Mammary epithelial cell (primary cell): ENCODE measurements at regions of chr6 and their contacts with region 1.

Region 1: DNA sequence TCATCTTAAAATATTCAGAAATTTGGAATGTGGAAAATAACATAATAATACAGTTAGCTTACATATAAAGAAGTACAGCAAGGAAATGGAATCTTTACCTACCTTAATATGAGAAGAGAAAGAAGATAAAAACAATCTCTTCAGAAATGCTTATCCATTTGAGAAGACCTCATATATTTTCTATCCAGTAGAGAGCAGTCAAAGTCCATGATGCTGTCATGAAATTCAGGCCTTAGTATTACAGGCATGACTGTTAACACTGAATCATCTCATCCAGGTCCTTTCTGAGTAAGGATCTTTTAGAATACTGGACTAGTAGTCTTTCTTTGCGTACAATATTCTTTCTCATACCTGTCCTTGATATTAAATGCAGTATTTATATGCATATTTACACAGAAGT is 713.4 kb downstream of the CD109 start:
- DNase-seq: peak; percentile 49
- H3K4me3 ChIP-seq: no peak overlapping the region
- H3K27ac ChIP-seq: no peak overlapping the region
- H3K4me1 ChIP-seq: no peaks in the 10 kb centered on the region
- H3K27me3 ChIP-seq: no peaks in the 10 kb centered on the region
- CTCF ChIP-seq: peak; percentile 29 to 70

Region 2: GRCh38 chr6:73969971-73970970 is 439.2 kb before region 1 on chr6:
- CTCF ChIA-PET with region 1: no interaction called
- dilution Hi-C with region 1: no loop called
- in situ Hi-C with region 1: no loop called
- intact Hi-C with region 1: loop called (anchors 2 kb)
- DNase-seq: peak; percentile 54
- H3K4me3 ChIP-seq: no peak overlapping the region
- H3K27ac ChIP-seq: no peak overlapping the region
- H3K4me1 ChIP-seq: no peaks in the 10 kb centered on the region
- H3K27me3 ChIP-seq: no peaks in the 10 kb centered on the region
- CTCF ChIP-seq: peak; percentile 80 to 82

Region 3: DNA sequence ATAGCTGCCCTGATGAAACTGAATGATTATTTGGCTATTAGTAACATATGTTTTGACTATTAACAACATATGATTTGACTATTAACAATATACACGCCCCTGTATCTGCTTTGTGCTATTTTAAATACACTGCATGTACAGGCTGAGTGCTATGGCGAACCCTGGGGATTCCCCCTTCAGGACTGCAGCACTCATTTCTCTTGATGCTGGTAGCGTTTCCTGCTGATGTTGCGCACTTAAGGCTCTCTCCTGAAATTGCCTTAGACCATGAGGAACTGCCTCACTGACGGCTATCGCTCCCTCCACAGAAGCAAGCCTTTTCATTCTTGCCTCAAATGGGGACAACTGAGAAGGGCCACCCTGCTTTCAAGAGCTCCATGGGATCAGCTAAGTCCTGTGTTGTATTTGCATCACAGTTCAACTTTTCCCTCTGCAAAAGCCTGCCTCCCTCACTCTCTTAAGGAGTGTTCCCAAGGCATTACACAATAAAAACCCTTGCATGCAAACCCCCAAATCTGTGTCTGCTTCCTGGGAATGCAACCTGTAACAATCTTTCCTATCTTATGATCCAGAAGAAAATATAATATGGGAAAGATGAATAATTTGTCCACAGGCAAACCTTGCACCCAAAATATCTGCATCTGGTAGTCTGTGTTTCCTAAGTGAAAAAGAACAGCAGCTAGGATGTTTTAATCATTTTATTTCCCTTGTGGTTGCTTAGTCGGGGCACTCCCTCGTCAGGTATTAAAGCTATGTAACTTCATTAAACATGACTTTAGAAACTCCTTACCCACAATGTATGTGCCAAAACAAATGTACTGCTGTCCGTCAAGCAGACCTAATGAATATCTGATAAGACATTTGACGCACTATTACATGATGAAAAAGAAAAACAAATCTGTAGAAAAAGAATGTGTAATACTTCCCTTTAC is 340.0 kb after region 1 on chr6:
- CTCF ChIA-PET with region 1: no interaction called
- dilution Hi-C with region 1: no loop called
- in situ Hi-C with region 1: loop called in 1 of 2 experiments (anchors 25 kb)
- intact Hi-C with region 1: no loop called
- DNase-seq: peak; percentile 78
- H3K4me3 ChIP-seq: no peak overlapping the region
- H3K27ac ChIP-seq: peak overlapping the region; percentile 53
- H3K4me1 ChIP-seq: peaks cover 25% of the 10 kb centered on the region
- H3K27me3 ChIP-seq: no peaks in the 10 kb centered on the region
- CTCF ChIP-seq: no peak

Region 4: GRCh38 chr6:74899416-74899815 is 490.0 kb after region 1 on chr6:
- CTCF ChIA-PET with region 1: no interaction called
- dilution Hi-C with region 1: no loop called
- in situ Hi-C with region 1: no loop called
- intact Hi-C with region 1: loop called (anchors 5 kb)
- DNase-seq: peak; percentile 79
- H3K4me3 ChIP-seq: no peak overlapping the region
- H3K27ac ChIP-seq: peak overlapping the region; percentile 31
- H3K4me1 ChIP-seq: peaks cover 10% of the 10 kb centered on the region
- H3K27me3 ChIP-seq: no peaks in the 10 kb centered on the region
- CTCF ChIP-seq: peak; percentile 83 to 95